ENCODE measurements at regions of chr15 and their contacts with region 1.

Region 1: DNA sequence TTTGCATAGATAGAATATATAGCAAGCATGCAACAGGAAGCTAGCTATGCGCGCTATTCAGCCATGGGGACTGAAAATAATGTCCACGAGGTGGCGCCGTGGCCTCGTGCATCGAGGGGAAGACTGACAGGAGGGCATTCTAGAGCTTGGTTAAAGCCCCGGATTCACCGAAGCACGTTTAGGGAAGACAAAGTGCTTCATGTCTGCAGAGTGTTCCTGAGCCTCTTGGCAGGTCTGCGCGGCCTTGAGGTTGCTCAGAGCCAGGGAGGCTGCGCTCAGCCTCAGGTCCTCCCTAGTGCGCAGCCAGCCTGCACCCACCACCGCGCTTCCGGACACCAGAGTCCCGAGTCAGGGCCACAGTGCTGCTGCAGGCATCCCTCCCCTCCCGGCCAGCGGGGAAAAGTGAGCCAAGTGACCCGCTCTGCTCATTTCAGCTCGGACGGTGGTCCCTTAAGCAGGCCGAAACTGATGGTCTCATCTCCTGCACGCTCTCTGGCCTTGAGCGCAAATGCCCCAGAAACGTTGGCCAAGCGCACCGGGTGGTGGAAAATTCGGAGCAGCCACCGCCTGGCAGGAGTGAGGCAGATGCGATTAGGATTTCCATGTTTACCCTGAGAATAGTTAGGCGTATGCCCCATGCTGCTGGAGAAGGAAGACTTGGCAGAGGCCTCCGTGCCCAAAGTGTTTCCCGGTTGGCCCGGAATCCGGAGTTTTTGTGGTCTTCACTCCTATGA is 24.8 kb downstream of the GABRA5 start:
- DNase-seq: peak; percentile 46
- H3K4me3 ChIP-seq: no peak overlapping the region
- H3K27ac ChIP-seq: no peak overlapping the region
- H3K4me1 ChIP-seq: no peaks in the 10 kb centered on the region
- H3K27me3 ChIP-seq: no peaks in the 10 kb centered on the region
- CTCF ChIP-seq: peak; percentile 49 to 52
- POLR2A ChIP-seq: no peak

Region 2: GRCh38 chr15:26260517-26261133 is 631.0 kb before region 1 on chr15:
- CTCF ChIA-PET with region 1: no interaction called
- POLR2A ChIA-PET with region 1: no interaction called
- dilution Hi-C with region 1: no loop called
- intact Hi-C with region 1: no loop called
- DNase-seq: no peak
- H3K4me3 ChIP-seq: no peak overlapping the region
- H3K27ac ChIP-seq: no peak overlapping the region
- H3K4me1 ChIP-seq: no peaks in the 10 kb centered on the region
- H3K27me3 ChIP-seq: no peaks in the 10 kb centered on the region
- CTCF ChIP-seq: peak in 1 of 2 donors; percentile 8
- POLR2A ChIP-seq: no peak

Region 3: DNA sequence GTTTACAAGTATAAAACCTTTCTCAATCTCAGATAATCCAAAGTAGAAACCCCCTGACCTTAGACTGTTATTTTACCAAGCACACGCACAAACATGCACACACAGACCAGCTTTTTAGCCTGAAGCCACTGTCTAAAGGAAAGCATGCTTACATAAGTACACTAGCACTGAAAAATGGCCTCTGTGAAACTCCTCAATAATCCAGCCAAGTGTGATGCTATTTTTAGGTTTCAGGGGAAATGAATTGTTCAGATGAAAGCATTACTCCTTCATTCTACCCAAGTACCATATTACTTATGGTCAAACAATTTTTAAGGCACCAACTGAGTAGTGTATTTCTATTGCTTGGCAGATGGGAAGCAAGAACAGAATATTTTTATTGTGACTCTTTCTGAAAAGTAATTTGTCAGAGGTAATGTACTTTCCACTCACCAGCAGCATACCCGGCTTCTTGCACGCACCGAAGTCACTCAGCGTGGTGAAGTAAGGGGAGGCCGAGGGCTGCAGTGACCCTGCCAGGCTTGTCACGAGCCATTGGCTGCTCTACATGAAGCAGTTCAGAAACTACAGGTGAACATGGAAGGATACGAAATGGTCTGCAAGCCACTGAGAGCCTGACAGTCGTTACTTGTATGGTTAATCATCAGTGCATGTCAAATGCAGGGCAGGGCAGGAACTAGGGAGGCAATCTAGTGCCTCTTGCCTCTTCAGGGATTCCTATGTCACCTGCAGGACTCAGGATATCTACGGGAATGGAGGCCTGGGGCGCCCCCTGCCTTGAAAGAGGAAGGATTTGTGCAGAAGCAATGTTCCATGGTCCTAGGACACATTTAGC is 225.4 kb before region 1 on chr15:
- CTCF ChIA-PET with region 1: no interaction called
- POLR2A ChIA-PET with region 1: no interaction called
- dilution Hi-C with region 1: no loop called
- intact Hi-C with region 1: no loop called
- DNase-seq: no peak
- H3K4me3 ChIP-seq: no peak overlapping the region
- H3K27ac ChIP-seq: no peak overlapping the region
- H3K4me1 ChIP-seq: no peaks in the 10 kb centered on the region
- H3K27me3 ChIP-seq: no peaks in the 10 kb centered on the region
- CTCF ChIP-seq: no peak
- POLR2A ChIP-seq: no peak

Region 4: GRCh38 chr15:27017168-27017809 is 125.7 kb after region 1 on chr15:
- CTCF ChIA-PET with region 1: no interaction called
- POLR2A ChIA-PET with region 1: no interaction called
- dilution Hi-C with region 1: no loop called
- intact Hi-C with region 1: loop called (anchors 2 kb)
- DNase-seq: peak; percentile 6
- H3K4me3 ChIP-seq: no peak overlapping the region
- H3K27ac ChIP-seq: no peak overlapping the region
- H3K4me1 ChIP-seq: no peaks in the 10 kb centered on the region
- H3K27me3 ChIP-seq: no peaks in the 10 kb centered on the region
- CTCF ChIP-seq: peak; percentile 59
- POLR2A ChIP-seq: no peak

Region 5: GRCh38 chr15:27358751-27359434 is 467.3 kb after region 1 on chr15:
- CTCF ChIA-PET with region 1: interaction called, 3 read pairs
- POLR2A ChIA-PET with region 1: no interaction called
- dilution Hi-C with region 1: no loop called
- intact Hi-C with region 1: loop called (anchors 5 kb)
- DNase-seq: no peak
- H3K4me3 ChIP-seq: no peak overlapping the region
- H3K27ac ChIP-seq: no peak overlapping the region
- H3K4me1 ChIP-seq: no peaks in the 10 kb centered on the region
- H3K27me3 ChIP-seq: no peaks in the 10 kb centered on the region
- CTCF ChIP-seq: peak in 1 of 2 donors; percentile 21
- POLR2A ChIP-seq: no peak

Measured in endothelial cell of umbilical vein (primary cell).